ENCODE measurements at regions of chr1 and their contacts with region 1.

Region 1: GRCh38 chr1:100988121-100988520 is 37.5 kb downstream of the DPH5 start:
- DNase-seq: no peak
- ATAC-seq: no peak
- H3K4me3 ChIP-seq: no peak overlapping the region
- H3K27ac ChIP-seq: no peak overlapping the region
- H3K4me1 ChIP-seq: no peaks in the 10 kb centered on the region
- H3K27me3 ChIP-seq: no peaks in the 10 kb centered on the region
- CTCF ChIP-seq: no peak
- EP300 ChIP-seq: no peak
- POLR2A ChIP-seq: no peak
- RAD21 ChIP-seq: no peak

Region 2: DNA sequence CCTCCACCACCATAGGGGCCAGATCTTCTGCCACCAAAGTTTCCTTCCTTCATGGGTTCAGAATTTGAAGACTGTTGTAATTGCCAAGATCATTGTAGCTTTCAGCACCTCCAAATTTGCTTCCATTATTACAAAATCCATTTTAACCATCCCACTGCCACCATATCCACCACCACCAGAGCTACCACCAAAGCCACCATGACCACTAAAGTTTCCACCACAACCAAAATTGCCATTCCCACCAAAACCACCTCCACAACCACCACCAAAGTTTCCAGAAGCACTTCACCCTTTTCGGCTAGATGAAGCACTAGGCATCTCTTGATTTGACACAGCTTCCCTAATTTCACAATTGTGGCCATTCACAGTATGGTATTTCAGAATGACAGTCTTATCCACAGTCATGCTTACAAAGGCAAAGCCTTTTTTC is 47.0 kb before region 1 on chr1:
- CTCF ChIA-PET with region 1: no interaction called
- POLR2A ChIA-PET with region 1: no interaction called
- in situ Hi-C with region 1: no loop called
- intact Hi-C with region 1: loop called (anchors 1 kb)
- DNase-seq: no peak
- ATAC-seq: no peak
- H3K4me3 ChIP-seq: no peak overlapping the region
- H3K27ac ChIP-seq: no peak overlapping the region
- H3K4me1 ChIP-seq: no peaks in the 10 kb centered on the region
- H3K27me3 ChIP-seq: no peaks in the 10 kb centered on the region
- CTCF ChIP-seq: no peak
- EP300 ChIP-seq: no peak
- POLR2A ChIP-seq: no peak
- RAD21 ChIP-seq: no peak